Astrocyte of the cerebellum (primary cell): ENCODE measurements at regions of chr2 and their contacts with region 1.

Region 1: DNA sequence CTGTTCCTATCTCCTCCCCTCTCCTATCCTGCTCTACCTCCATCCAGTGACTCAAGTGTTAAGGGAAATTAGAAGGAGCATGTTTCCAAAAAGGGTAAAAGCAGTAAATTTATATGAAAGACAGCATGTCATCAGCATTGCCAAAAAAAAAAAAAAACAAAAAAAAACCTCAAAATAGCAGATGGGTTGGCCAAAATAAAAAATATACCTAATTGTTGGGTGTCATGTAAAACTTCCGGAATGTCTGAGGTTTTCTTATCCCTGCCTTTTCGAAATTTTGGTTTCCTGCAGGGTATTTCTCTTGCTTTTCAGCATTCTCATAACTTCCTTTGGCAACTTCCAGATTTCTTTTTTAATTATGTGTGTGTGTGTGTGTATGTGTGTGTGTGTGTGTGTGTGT is 241.6 kb upstream of the FN1 start:
- DNase-seq: no peak
- H3K4me3 ChIP-seq: no peak overlapping the region
- CTCF ChIP-seq: no peak

Region 2: GRCh38 chr2:215598376-215598975 is 79.0 kb before region 1 on chr2:
- in situ Hi-C with region 1: no loop called
- DNase-seq: no peak
- H3K4me3 ChIP-seq: no peak overlapping the region
- CTCF ChIP-seq: no peak

Region 3: GRCh38 chr2:215609089-215610032 is 68.1 kb before region 1 on chr2:
- in situ Hi-C with region 1: loop called (anchors 5 kb)
- DNase-seq: no peak
- H3K4me3 ChIP-seq: no peak overlapping the region
- CTCF ChIP-seq: no peak